CD4-positive, alpha-beta T cell (primary cell): ENCODE measurements at regions of chr10 and their contacts with region 1.

Region 1: GRCh38 chr10:76231286-76231934 is 800.0 kb downstream of the LRMDA start:
- DNase-seq: no peak
- ATAC-seq: no peak
- H3K4me3 ChIP-seq: no peak overlapping the region
- H3K4me3 Mint-ChIP-seq: no peak overlapping the region
- H3K27ac ChIP-seq: no peak overlapping the region
- H3K27ac Mint-ChIP-seq: no peak overlapping the region
- H3K4me1 ChIP-seq: no peaks in the 10 kb centered on the region
- H3K4me1 Mint-ChIP-seq: no peaks in the 10 kb centered on the region
- H3K27me3 ChIP-seq: no peaks in the 10 kb centered on the region
- H3K27me3 Mint-ChIP-seq: no peaks in the 10 kb centered on the region
- CTCF ChIP-seq: no peak

Region 2: GRCh38 chr10:76139431-76139830 is 92.0 kb before region 1 on chr10:
- CTCF ChIA-PET with region 1: no interaction called
- POLR2A ChIA-PET with region 1: no interaction called
- intact Hi-C with region 1: loop called in 1 of 2 experiments (anchors 5 kb)
- DNase-seq: peak in 3 of 14 experiments; percentile 3 to 11 (median 4)
- ATAC-seq: peak; percentile 78
- H3K4me3 ChIP-seq: no peak overlapping the region
- H3K4me3 Mint-ChIP-seq: peak overlapping the region; percentile 40
- H3K27ac ChIP-seq: no peak overlapping the region
- H3K27ac Mint-ChIP-seq: peak overlapping the region; percentile 78
- H3K4me1 ChIP-seq: no peaks in the 10 kb centered on the region
- H3K4me1 Mint-ChIP-seq: peaks cover 8% of the 10 kb centered on the region
- H3K27me3 ChIP-seq: no peaks in the 10 kb centered on the region
- H3K27me3 Mint-ChIP-seq: no peaks in the 10 kb centered on the region
- CTCF ChIP-seq: no peak

Region 3: DNA sequence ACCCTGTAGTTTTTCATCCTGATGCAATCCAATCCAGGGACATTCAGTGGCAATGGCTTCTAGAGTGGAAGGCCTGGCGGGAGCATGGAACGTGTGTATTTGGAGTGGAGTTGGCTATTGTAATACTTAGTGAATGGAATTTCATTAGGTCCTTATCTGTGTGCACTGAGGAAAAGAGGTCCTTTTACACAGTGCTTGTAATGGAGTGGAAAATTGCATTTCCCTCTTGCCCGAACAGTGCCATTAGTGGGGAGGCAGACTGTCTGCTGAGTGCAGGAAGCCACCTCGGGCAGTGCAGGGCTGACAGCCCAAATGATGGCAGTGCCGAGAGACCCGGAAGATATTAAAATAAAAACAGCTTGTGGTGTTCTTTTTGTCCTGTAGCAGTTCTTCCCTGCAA is 13.4 kb before region 1 on chr10:
- CTCF ChIA-PET with region 1: no interaction called
- POLR2A ChIA-PET with region 1: no interaction called
- intact Hi-C with region 1: no loop called
- DNase-seq: no peak
- ATAC-seq: no peak
- H3K4me3 ChIP-seq: no peak overlapping the region
- H3K4me3 Mint-ChIP-seq: no peak overlapping the region
- H3K27ac ChIP-seq: no peak overlapping the region
- H3K27ac Mint-ChIP-seq: no peak overlapping the region
- H3K4me1 ChIP-seq: no peaks in the 10 kb centered on the region
- H3K4me1 Mint-ChIP-seq: no peaks in the 10 kb centered on the region
- H3K27me3 ChIP-seq: no peaks in the 10 kb centered on the region
- H3K27me3 Mint-ChIP-seq: no peaks in the 10 kb centered on the region
- CTCF ChIP-seq: no peak

Region 4: GRCh38 chr10:77628906-77629730 is 1397.7 kb after region 1 on chr10:
- CTCF ChIA-PET with region 1: no interaction called
- POLR2A ChIA-PET with region 1: no interaction called
- intact Hi-C with region 1: no loop called
- DNase-seq: no peak
- ATAC-seq: no peak
- H3K4me3 ChIP-seq: no peak overlapping the region
- H3K4me3 Mint-ChIP-seq: no peak overlapping the region
- H3K27ac ChIP-seq: no peak overlapping the region
- H3K27ac Mint-ChIP-seq: no peak overlapping the region
- H3K4me1 ChIP-seq: no peaks in the 10 kb centered on the region
- H3K4me1 Mint-ChIP-seq: no peaks in the 10 kb centered on the region
- H3K27me3 ChIP-seq: peaks cover 2 to 3% of the 10 kb centered on the region in 2 experiments
- H3K27me3 Mint-ChIP-seq: peaks cover 36% of the 10 kb centered on the region
- CTCF ChIP-seq: no peak